ENCODE measurements at regions of chrX and their contacts with region 1.

Region 1: GRCh38 chrX:24925430-24925829 is 90.3 kb downstream of the ARX start:
- DNase-seq: no peak
- H3K4me3 ChIP-seq: no peak overlapping the region
- H3K27ac ChIP-seq: no peak overlapping the region
- H3K4me1 ChIP-seq: no peaks in the 10 kb centered on the region
- H3K27me3 ChIP-seq: no peaks in the 10 kb centered on the region
- CTCF ChIP-seq: no peak

Region 2: GRCh38 chrX:24979081-24979480 is 53.7 kb after region 1 on chrX:
- CTCF ChIA-PET with region 1: no interaction called
- POLR2A ChIA-PET with region 1: no interaction called
- intact Hi-C with region 1: loop called (anchors 5 kb)
- DNase-seq: no peak
- H3K4me3 ChIP-seq: no peak overlapping the region
- H3K27ac ChIP-seq: no peak overlapping the region
- H3K4me1 ChIP-seq: no peaks in the 10 kb centered on the region
- H3K27me3 ChIP-seq: peaks cover 51% of the 10 kb centered on the region
- CTCF ChIP-seq: no peak

Measured in A673 (cell line).